ENCODE measurements at regions of chr21 and their contacts with region 1.

Region 1: GRCh38 chr21:44873356-44874239 is at the start of gene PTTG1IP:
- DNase-seq: peak; percentile 97
- H3K4me3 ChIP-seq: peak within 1 kb of the TSS; percentile 92 to 97
- H3K27ac ChIP-seq: peak within 1 kb of the TSS; percentile 73 to 98
- H3K4me1 ChIP-seq: peaks cover 41% of the 10 kb centered on the region
- H3K27me3 ChIP-seq: no peaks in the 10 kb centered on the region
- CTCF ChIP-seq: no peak
- POLR2A ChIP-seq: peak; percentile 52
- total RNA-seq, gene PTTG1IP: 190 to 195 TPM

Region 2: DNA sequence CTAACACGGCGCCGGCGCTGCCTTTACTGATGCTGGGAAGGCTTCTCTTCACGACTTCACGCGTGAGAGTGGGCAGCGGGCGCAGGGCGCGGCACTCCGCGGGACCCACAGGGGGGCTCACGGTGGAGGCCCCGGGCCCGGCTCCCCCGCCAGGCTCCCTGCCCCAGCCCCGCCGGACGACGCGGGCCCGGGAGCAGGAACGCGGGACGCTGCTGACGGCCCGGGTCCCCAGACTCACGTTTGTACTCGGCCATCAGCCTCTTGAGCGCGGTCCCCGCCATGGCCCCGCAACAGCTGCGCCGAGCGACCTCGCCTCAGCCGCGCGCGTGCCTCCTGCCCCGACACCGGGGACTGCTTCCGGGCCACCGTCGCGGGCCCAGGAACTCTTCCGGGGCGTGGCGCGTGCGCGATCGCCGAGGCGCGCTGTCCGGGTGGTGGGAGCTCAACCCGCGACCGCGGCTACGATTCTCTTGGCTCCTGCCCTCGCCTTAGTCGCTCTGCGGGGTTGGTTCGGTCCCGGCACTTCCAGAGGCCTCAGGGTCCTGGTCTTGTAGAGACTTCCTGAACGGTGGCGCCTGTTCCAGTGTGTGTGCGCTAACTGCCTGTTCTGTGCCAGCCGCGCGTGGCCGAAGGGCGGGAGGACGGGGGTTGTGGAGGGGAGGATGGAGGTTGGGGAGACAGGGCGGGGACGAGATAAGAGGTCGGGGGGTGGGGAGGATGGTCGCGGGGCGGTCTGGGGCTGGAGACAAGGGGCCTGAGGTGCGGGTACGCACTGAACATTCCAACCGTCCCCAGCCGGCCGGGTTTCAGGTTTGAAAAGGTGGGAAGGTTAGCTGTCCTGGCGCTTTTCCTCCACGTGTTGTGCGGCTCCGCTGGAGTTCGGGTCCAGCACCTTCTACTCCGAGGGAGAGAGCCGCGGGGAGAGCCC is 71.9 kb before region 1 on chr21 and contains the start of gene UBE2G2:
- intact Hi-C with region 1: loop called (anchors 5 kb)
- DNase-seq: peak; percentile 83
- H3K4me3 ChIP-seq: peak within 1 kb of the TSS; percentile 90 to 99
- H3K27ac ChIP-seq: peak within 1 kb of the TSS; percentile 74 to 80
- H3K4me1 ChIP-seq: peaks cover 15% of the 10 kb centered on the region
- H3K27me3 ChIP-seq: no peaks in the 10 kb centered on the region
- CTCF ChIP-seq: no peak
- POLR2A ChIP-seq: no peak
- total RNA-seq, gene UBE2G2: 73.6 to 82.8 TPM

Region 3: DNA sequence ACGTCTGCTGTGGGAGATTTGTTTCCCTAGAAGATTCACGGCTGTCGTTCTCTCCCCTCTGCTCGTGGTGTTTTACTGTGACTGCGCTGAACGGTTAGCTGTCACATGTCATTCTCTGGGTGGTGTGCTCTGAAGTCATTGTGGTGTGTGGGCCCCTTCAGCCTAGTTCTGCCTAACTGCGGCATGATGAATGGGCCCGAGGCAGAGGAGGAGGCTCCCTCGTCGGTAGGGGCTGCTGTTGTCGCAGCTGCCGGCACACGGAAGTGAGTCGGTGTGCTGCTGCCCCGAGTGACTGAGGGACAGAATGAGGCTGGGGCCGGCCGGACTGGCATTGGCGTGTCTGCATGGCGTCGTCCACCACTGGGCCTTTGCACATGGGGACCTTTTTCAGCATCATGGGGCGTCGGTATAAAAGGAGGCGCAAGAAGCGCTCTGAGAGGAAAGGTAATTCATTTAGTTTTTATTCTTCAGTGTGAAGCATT is 278.7 kb after region 1 on chr21:
- intact Hi-C with region 1: no loop called
- DNase-seq: peak; percentile 16
- H3K4me3 ChIP-seq: no peak overlapping the region
- H3K27ac ChIP-seq: no peak overlapping the region
- H3K4me1 ChIP-seq: no peaks in the 10 kb centered on the region
- H3K27me3 ChIP-seq: no peaks in the 10 kb centered on the region
- CTCF ChIP-seq: no peak
- POLR2A ChIP-seq: no peak